Thyroid gland (tissue), 4 donors: ENCODE measurements at regions of chr12 and their contacts with region 1.

Region 1: DNA sequence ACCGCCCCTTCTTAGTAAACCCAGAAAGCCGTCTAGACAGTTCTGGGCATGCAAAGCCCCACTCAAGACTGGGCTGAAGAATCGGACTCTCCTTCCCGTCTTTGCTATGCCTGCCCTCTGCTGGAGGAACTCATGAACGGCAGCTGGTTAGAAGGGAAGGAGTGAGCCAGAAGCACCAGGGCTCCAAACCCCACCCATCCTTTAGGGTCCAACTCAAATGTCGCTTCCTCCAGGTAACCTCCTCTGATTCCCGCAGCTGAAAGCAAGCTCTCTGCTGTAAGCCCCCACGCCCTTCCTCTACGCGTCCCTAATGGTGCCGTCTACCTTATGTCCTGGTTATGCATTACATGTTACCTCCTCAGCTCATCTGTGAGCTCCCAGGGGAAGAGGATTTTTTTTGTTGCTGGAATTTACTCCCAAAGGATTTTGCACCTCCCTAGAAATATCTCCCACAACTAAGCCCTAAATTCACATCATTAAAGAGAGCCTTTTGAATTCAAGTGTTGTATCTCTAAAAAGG is 59.0 kb upstream of the SCN8A start:
- DNase-seq: peak; percentile 74 to 81
- H3K4me3 ChIP-seq: no peak overlapping the region
- H3K27ac ChIP-seq: no peak overlapping the region
- H3K4me1 ChIP-seq: no peaks in the 10 kb centered on the region
- H3K27me3 ChIP-seq: no peaks in the 10 kb centered on the region
- CTCF ChIP-seq: peak; percentile 41 to 88 (median 74)
- POLR2A ChIP-seq: no peak

Region 2: DNA sequence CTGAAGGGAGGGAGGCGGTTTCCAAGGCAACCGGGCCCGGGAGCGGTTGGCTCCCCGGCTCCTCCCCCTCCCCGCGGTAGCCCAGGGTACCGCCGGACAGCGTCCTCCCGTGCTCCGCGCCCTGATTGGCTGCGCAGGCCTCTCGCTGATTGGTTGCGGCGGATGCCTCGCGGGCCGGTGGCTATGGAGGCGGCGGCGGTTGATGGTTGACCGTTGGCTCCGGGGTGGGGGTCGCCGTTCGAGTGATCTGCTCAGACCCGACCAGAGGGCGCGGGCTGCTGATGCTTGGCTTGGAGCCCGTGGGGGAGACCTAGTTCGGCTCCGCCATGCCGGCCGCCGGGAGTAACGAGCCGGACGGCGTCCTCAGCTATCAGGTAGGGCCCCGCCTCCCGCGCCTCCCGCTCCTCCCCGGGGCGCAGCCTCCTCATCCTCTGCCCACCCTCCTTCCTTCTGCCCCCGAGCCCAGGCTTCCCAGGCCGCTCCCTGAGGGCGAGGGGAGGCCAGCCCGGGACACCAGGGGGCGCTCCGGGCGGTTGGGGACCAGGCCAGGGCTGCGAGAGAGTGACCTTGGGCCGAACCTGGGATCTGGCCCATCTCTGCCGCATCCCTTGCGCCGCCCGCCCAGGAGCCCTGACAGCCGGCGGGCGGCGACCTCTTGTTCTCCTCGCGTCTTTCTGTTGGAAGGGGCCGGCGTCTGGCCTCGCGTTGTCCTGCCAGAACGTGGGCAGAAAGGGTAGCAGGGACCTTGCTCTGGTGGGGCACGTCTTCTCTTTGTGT is 107.2 kb before region 1 on chr12 and contains the start of gene SLC4A8:
- intact Hi-C with region 1: loop called (anchors 5 kb)
- DNase-seq: peak; percentile 62 to 72
- H3K4me3 ChIP-seq: peak within 1 kb of the TSS in 2 of 3 donors; percentile 2 to 21
- H3K27ac ChIP-seq: no peak within 1 kb of the TSS
- H3K4me1 ChIP-seq: peaks cover 0 to 6% of the 10 kb centered on the region in 2 donors
- H3K27me3 ChIP-seq: peaks cover 3% of the 10 kb centered on the region
- CTCF ChIP-seq: peak in 5 of 6 experiments; percentile 20 to 57 (median 34)
- POLR2A ChIP-seq: no peak
- total RNA-seq, gene SLC4A8: 0.33 to 1.5 (median 0.62) TPM